Left lung (tissue), 14 donors: ENCODE measurements at regions of chr14 and their contacts with region 1.

Region 1: GRCh38 chr14:64671591-64671990 is 32.6 kb upstream of the PLEKHG3 start:
- DNase-seq: peak in 2 of 4 donors; percentile 57 to 79
- ATAC-seq: peak; percentile 81
- H3K4me3 ChIP-seq: no peak overlapping the region
- H3K27ac ChIP-seq: no peak overlapping the region
- H3K4me1 ChIP-seq: peaks cover 0 to 34% of the 10 kb centered on the region in 2 donors
- H3K27me3 ChIP-seq: no peaks in the 10 kb centered on the region
- CTCF ChIP-seq: peak; percentile 51 to 52

Region 2: GRCh38 chr14:64764641-64765520 is 93.3 kb after region 1 on chr14:
- intact Hi-C with region 1: loop called in 1 of 2 experiments (anchors 5 kb)
- DNase-seq: peak; percentile 70 to 91 (median 86)
- ATAC-seq: peak; percentile 86
- H3K4me3 ChIP-seq: no peak overlapping the region
- H3K27ac ChIP-seq: no peak overlapping the region
- H3K4me1 ChIP-seq: peaks cover 6 to 26% of the 10 kb centered on the region in 2 donors
- H3K27me3 ChIP-seq: peaks cover 0 to 26% of the 10 kb centered on the region in 2 donors
- CTCF ChIP-seq: peak; percentile 84 to 88